Adrenal gland (tissue), 19 donors: ENCODE measurements at regions of chr19 and their contacts with region 1.

Region 1: DNA sequence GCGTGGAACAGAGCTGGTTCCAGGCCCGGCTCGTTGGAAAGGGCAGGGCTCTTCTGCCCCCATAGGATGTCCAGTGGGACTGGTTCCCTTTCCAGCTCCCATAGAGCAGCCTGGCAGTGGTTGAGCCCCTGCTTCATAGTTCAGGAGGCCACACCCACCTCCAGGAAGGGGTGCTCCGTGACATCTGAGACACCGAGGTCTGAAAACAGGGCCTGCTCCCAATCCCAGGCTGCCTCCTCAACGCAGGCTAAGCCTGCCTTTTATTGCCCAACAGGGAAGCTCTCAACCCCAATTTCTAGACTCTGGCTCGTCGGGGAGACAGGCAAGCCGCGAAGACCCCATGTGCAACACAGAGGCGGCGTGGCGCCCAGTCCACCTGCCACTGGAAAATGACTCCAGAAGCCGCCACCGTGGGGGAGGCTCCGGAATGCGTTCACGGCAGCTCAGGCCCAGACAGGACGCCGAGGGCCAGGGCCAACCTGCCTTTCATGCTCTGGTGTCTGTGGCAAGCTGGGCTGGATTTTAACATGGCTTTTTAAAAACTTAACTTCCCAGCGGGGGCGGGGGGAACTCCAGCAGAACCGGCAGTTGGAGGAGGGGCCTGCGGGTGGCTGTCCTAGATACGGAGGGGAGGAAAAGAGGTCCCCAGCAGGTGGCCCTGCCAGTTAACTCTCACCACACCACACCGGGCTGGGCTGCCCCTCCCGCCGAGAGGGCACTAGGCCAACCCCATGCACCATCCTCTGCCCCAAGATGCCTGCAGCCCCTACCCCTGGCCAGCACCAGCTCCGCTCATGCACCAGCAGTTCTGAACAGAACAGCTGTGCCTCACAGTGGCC is 17.9 kb upstream of the TINCR start:
- DNase-seq: peak in 6 of 7 donors; percentile 48 to 76 (median 67)
- H3K4me3 ChIP-seq: no peak overlapping the region
- H3K27ac ChIP-seq: peak overlapping the region in 4 of 5 donors; percentile 2 to 71 (median 32)
- H3K4me1 ChIP-seq: peaks cover 0 to 19% of the 10 kb centered on the region in 2 donors
- H3K27me3 ChIP-seq: no peaks in the 10 kb centered on the region
- CTCF ChIP-seq: no peak
- POLR2A ChIP-seq: no peak

Region 2: GRCh38 chr19:5057861-5058260 is 527.8 kb before region 1 on chr19:
- intact Hi-C with region 1: loop called in 1 of 2 experiments (anchors 10 kb)
- DNase-seq: no peak
- H3K4me3 ChIP-seq: no peak overlapping the region
- H3K27ac ChIP-seq: no peak overlapping the region
- H3K4me1 ChIP-seq: no peaks in the 10 kb centered on the region
- H3K27me3 ChIP-seq: no peaks in the 10 kb centered on the region
- CTCF ChIP-seq: no peak
- POLR2A ChIP-seq: no peak

Region 3: GRCh38 chr19:5987077-5987818 is 401.6 kb after region 1 on chr19:
- intact Hi-C with region 1: no loop called
- DNase-seq: peak; percentile 77 to 90 (median 81)
- H3K4me3 ChIP-seq: peak overlapping the region in 1 of 4 donors; percentile 53
- H3K27ac ChIP-seq: no peak overlapping the region
- H3K4me1 ChIP-seq: peaks cover 0 to 10% of the 10 kb centered on the region in 2 donors
- H3K27me3 ChIP-seq: no peaks in the 10 kb centered on the region
- CTCF ChIP-seq: peak; percentile 87 to 95 (median 94)
- POLR2A ChIP-seq: no peak